Ascending aorta (tissue), 2 donors: ENCODE measurements at regions of chr7 and their contacts with region 1.

Region 1: DNA sequence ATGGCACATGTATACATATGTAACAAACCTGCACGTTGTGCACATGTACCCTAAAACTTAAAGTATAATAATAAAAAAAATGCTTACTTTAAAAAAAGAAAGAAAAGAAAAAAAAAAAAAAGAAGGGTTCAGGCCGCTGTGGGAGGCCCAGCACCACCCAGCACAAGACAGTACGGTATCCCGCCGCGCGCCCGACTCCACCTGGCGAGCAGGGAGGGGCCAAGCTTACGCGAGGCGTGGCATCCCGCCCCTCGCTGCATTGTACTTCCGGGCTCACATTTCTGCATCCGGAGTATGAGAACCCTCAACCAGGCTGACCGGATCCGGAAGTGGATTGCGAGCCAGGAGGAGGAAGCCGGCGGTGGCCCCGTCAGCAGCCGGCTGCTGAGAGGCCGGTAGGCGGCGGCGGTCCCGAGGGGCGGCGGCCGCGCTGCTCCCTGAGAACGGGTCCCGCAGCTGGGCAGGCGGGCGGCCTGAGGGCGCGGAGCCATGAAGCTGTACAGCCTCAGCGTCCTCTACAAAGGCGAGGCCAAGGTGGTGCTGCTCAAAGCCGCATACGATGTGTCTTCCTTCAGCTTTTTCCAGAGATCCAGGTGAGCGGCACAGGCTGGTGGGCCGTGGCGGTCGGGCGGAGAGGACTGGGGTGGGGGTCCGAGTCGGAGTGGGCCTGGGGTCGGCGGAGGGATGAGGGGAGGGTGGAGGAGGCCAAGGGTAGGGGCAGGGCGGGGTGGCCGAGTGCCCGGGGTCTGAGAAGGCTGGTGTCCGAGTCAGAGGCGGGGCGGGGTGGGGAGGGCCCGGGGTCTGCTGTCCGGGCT is at the start of gene YKT6:
- DNase-seq: peak; percentile 77 to 97
- H3K4me3 ChIP-seq: peak within 1 kb of the TSS; percentile 67 to 88
- H3K27ac ChIP-seq: peak within 1 kb of the TSS; percentile 73 to 74
- H3K4me1 ChIP-seq: no peaks in the 10 kb centered on the region
- H3K27me3 ChIP-seq: no peaks in the 10 kb centered on the region
- CTCF ChIP-seq: peak; percentile 45 to 81 (median 73)
- total RNA-seq, gene YKT6: 40.1 TPM

Region 2: DNA sequence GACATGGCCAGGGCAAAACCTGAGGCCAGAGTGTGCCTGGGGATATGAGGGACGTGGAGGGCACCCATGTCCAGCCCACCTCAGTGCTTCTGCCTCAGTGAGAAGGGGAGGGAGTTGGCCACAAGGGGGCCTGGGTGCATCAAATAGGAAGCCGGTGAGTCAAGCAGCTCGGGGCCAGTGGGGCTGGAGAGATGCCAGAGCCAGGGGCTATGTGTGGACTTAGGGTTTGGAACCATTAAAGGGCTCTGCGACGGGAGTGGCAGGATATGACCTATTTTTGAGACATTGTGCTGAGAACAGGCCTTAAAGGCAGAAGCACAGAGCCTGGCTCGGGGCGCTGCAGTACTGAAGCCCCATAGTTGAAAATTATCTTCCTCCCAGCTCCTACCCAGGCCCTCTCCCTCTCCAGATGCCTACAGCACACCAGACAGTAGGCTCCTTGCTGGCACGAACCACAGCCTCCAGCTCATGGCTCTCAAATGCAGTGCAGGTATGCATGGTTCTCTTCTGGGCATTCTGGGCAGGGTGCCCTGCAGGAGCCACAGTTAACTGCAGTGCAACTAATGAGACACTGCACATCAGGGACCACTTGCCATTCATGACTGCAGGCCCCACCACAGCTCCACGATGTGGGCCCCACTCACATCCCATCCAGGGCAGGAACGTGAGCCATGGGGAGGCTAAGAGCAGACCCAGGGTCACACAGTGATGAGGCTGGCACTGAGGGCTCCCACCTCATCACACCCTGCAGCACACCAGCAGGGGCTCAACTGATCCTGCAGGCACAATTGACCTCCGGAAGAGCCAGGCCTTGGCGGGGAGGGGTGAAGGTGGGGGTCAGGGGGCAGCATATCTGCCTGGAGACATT is 128.3 kb before region 1 on chr7:
- intact Hi-C with region 1: loop called (anchors 2 kb)
- DNase-seq: peak; percentile 64 to 96
- H3K4me3 ChIP-seq: peak overlapping the region in 1 of 2 donors; percentile 34
- H3K27ac ChIP-seq: peak overlapping the region; percentile 70 to 71
- H3K4me1 ChIP-seq: peaks cover 21 to 24% of the 10 kb centered on the region in 2 donors
- H3K27me3 ChIP-seq: no peaks in the 10 kb centered on the region
- CTCF ChIP-seq: peak; percentile 57 to 81 (median 74)